CD4-positive, alpha-beta T cell (primary cell): ENCODE measurements at regions of chr2 and their contacts with region 1.

Region 1: DNA sequence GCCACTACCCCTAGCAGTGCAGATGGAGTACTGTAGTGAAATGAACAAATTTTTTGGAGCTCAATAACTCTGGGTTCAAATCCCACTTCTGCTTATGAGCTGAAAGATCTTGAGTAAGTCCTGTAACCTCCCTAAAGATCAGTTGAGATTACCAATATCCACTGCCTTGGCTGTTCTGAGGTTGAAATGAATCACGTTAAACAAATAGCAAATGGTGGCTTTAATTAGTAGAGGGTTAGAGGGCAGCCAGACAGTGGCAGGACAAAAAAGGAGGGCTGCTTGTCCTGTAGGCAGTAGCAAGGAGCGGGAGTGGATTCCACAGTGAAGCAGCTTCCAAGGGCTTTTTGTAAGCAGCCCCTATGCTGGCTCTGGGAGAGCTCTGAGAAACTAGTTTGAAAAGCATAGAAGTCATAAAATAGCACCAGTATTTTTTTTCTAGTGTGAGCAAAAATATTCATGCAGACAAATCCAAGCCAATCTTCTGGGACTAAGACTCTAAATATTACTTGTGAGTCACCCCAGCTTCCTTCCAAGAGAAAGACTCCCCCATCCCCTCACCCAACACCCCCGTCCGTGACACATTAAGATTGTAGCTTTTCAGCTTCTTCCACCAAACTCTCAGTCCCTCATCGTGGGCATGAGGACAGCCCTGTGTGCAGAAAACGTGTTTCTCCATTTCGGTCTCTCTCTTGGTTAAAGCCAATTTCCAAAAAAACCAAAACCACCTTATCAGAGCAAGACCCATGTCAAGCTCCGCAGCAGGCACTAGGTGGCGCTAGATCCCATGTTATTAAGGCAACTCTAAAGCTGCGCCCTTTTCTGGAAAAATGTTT is 123.5 kb upstream of the LGALSL start:
- DNase-seq: peak; percentile 63 to 92 (median 74)
- ATAC-seq: peak; percentile 24
- H3K4me3 ChIP-seq: no peak overlapping the region
- H3K4me3 Mint-ChIP-seq: peak overlapping the region; percentile 81
- H3K27ac ChIP-seq: no peak overlapping the region
- H3K27ac Mint-ChIP-seq: peak overlapping the region; percentile 50
- H3K4me1 ChIP-seq: peaks cover 36% of the 10 kb centered on the region
- H3K4me1 Mint-ChIP-seq: peaks cover 38% of the 10 kb centered on the region
- H3K27me3 ChIP-seq: no peaks in the 10 kb centered on the region
- H3K27me3 Mint-ChIP-seq: no peaks in the 10 kb centered on the region
- CTCF ChIP-seq: peak; percentile 86

Region 2: DNA sequence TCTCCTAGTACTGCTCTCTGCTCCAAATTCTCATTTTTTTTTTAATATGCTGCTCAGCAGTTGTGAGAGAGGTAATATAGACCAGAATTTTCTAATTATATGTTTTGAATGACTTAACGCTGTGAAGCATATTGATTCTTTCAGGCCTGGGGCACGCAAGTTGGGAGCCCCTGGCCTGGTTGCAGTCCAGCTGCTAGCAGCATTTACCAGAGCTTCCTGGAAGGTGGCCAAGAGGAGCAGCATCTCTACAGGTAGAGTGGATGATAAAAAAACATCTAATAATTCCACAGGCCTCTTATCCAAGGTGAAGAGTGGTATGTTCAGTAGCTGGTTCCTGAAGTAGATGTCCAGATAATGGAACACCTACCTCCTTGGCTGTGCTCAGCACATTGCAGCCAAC is 496.1 kb before region 1 on chr2:
- CTCF ChIA-PET with region 1: no interaction called
- POLR2A ChIA-PET with region 1: no interaction called
- intact Hi-C with region 1: no loop called
- DNase-seq: no peak
- ATAC-seq: no peak
- H3K4me3 ChIP-seq: no peak overlapping the region
- H3K4me3 Mint-ChIP-seq: no peak overlapping the region
- H3K27ac ChIP-seq: no peak overlapping the region
- H3K27ac Mint-ChIP-seq: no peak overlapping the region
- H3K4me1 ChIP-seq: no peaks in the 10 kb centered on the region
- H3K4me1 Mint-ChIP-seq: no peaks in the 10 kb centered on the region
- H3K27me3 ChIP-seq: no peaks in the 10 kb centered on the region
- H3K27me3 Mint-ChIP-seq: peaks cover 7% of the 10 kb centered on the region
- CTCF ChIP-seq: no peak

Region 3: DNA sequence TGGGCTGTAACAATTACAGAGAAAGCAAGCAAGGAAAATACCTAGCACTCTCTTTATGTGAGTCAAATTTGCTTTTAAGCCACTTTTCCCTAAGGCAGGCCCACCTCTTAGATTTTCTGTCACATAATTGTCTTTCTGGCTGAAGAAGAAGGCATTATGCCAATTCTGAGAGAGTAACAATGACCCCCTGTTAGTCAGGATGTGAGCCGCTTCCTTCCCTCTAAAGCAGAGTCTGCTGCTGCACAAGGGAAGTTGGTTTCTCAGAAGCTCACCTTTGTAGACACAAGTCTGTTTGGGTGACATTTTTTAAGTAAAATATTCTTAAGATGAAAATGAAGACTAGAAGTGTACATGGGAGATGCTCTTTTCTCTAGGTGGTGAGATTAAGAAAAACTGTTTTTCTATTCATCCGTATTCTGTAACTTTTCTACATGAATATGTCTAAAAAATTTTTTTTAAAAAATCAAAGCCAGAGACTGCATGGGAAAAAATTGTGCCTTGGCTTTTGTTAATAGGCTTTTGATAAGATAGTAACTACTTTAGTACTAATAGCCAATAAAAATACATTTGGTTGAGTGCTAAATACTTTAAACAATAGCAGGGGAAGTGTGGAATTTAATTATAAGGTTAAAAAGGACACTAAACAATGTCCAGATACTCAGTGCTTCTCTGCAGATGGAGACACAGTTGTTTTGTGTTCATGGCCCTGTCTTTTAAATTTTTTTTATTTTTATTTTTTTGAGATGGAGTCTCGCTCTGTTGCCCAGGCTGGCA is 277.8 kb before region 1 on chr2:
- CTCF ChIA-PET with region 1: interaction called, 86 read pairs
- POLR2A ChIA-PET with region 1: interaction called, 57 read pairs
- intact Hi-C with region 1: loop called (anchors 1 kb)
- DNase-seq: peak in 5 of 14 experiments; percentile 27 to 56 (median 35)
- ATAC-seq: peak; percentile 53
- H3K4me3 ChIP-seq: no peak overlapping the region
- H3K4me3 Mint-ChIP-seq: peak overlapping the region; percentile 13
- H3K27ac ChIP-seq: no peak overlapping the region
- H3K27ac Mint-ChIP-seq: peak overlapping the region; percentile 55
- H3K4me1 ChIP-seq: peaks cover 15% of the 10 kb centered on the region
- H3K4me1 Mint-ChIP-seq: peaks cover 51% of the 10 kb centered on the region
- H3K27me3 ChIP-seq: no peaks in the 10 kb centered on the region
- H3K27me3 Mint-ChIP-seq: no peaks in the 10 kb centered on the region
- CTCF ChIP-seq: no peak

Region 4: GRCh38 chr2:64488050-64488974 is 157.8 kb after region 1 on chr2:
- CTCF ChIA-PET with region 1: interaction called, 40 read pairs
- POLR2A ChIA-PET with region 1: interaction called, 7 read pairs
- intact Hi-C with region 1: loop called (anchors 1 kb)
- DNase-seq: peak; percentile 63 to 88 (median 76)
- ATAC-seq: peak; percentile 88
- H3K4me3 ChIP-seq: no peak overlapping the region
- H3K4me3 Mint-ChIP-seq: no peak overlapping the region
- H3K27ac ChIP-seq: no peak overlapping the region
- H3K27ac Mint-ChIP-seq: no peak overlapping the region
- H3K4me1 ChIP-seq: peaks cover 15% of the 10 kb centered on the region
- H3K4me1 Mint-ChIP-seq: peaks cover 11% of the 10 kb centered on the region
- H3K27me3 ChIP-seq: no peaks in the 10 kb centered on the region
- H3K27me3 Mint-ChIP-seq: peaks cover 5% of the 10 kb centered on the region
- CTCF ChIP-seq: peak; percentile 99

Region 5: GRCh38 chr2:64825831-64826491 is 495.5 kb after region 1 on chr2:
- CTCF ChIA-PET with region 1: no interaction called
- POLR2A ChIA-PET with region 1: no interaction called
- intact Hi-C with region 1: no loop called
- DNase-seq: peak in 2 of 14 experiments; percentile 21 to 31
- ATAC-seq: no peak
- H3K4me3 ChIP-seq: no peak overlapping the region
- H3K4me3 Mint-ChIP-seq: no peak overlapping the region
- H3K27ac ChIP-seq: no peak overlapping the region
- H3K27ac Mint-ChIP-seq: no peak overlapping the region
- H3K4me1 ChIP-seq: peaks cover 1% of the 10 kb centered on the region
- H3K4me1 Mint-ChIP-seq: peaks cover 7% of the 10 kb centered on the region
- H3K27me3 ChIP-seq: no peaks in the 10 kb centered on the region
- H3K27me3 Mint-ChIP-seq: no peaks in the 10 kb centered on the region
- CTCF ChIP-seq: no peak

Region 6: GRCh38 chr2:64865073-64865830 is 534.8 kb after region 1 on chr2:
- CTCF ChIA-PET with region 1: no interaction called
- POLR2A ChIA-PET with region 1: no interaction called
- intact Hi-C with region 1: loop called in 1 of 2 experiments (anchors 2 kb)
- DNase-seq: peak; percentile 32 to 85 (median 58)
- ATAC-seq: peak; percentile 94
- H3K4me3 ChIP-seq: peak overlapping the region; percentile 62
- H3K4me3 Mint-ChIP-seq: peak overlapping the region; percentile 78
- H3K27ac ChIP-seq: no peak overlapping the region
- H3K27ac Mint-ChIP-seq: no peak overlapping the region
- H3K4me1 ChIP-seq: peaks cover 18% of the 10 kb centered on the region
- H3K4me1 Mint-ChIP-seq: no peaks in the 10 kb centered on the region
- H3K27me3 ChIP-seq: peaks cover 0 to 3% of the 10 kb centered on the region in 2 experiments
- H3K27me3 Mint-ChIP-seq: peaks cover 5% of the 10 kb centered on the region
- CTCF ChIP-seq: no peak

Region 7: DNA sequence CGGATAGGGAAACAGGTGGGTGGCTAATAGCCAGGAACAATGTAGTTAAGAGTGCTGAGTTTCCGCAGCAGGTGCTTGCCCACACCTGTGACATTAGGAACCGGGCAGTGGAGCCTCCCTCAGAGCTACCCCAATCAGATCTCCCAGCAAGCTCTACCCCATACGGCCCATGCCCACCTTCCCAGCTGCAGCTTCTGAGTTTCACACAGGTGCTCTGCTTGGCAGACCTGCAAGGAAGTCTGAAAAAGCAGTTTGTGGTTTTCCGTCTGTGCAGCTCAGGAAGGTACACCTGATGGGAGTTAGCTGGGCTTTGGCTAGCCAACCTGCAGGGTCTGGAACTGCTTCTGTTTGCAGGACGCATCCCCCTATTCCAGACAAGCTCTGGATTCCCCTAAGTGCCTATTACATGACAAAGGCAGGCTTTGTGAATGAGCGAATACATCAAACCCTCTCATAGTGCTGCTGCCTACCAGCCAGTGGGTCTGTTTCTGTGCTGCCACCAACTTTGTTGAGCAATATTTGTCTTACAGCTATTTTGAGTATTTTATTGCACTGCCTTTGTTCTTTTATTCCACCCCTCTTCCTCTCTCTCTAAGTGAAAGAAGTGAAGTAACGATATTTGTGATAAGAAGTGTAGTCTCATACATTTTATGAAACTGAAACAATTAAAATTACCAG is 701.0 kb after region 1 on chr2:
- CTCF ChIA-PET with region 1: no interaction called
- POLR2A ChIA-PET with region 1: no interaction called
- intact Hi-C with region 1: loop called in 1 of 2 experiments (anchors 10 kb)
- DNase-seq: peak in 6 of 14 experiments; percentile 5 to 45 (median 32)
- ATAC-seq: peak; percentile 68
- H3K4me3 ChIP-seq: no peak overlapping the region
- H3K4me3 Mint-ChIP-seq: peak overlapping the region; percentile 66
- H3K27ac ChIP-seq: peak overlapping the region; percentile 40 to 61
- H3K27ac Mint-ChIP-seq: peak overlapping the region; percentile 74
- H3K4me1 ChIP-seq: peaks cover 28% of the 10 kb centered on the region
- H3K4me1 Mint-ChIP-seq: peaks cover 26% of the 10 kb centered on the region
- H3K27me3 ChIP-seq: no peaks in the 10 kb centered on the region
- H3K27me3 Mint-ChIP-seq: no peaks in the 10 kb centered on the region
- CTCF ChIP-seq: no peak